ENCODE measurements at regions of chr4 and their contacts with region 1.

Region 1: DNA sequence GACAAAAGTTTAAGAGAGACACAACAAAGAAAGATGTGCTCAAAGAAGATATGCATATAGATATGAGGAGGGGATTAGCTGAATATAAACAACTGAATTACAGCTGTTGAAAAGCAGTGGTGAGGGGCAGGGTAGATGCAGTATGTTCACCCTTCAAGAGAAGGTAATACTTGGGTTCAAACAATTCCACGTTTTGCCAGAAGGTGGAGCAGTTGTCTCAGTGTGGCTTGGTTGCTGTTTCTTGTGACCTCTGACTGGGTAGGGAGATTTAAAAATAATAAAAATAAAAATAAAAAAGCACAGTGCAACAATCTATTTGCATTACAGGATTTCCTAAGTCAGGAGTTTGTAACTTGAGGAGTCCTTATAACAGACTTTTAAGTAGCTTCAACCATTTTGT is 23.3 kb downstream of the PHOX2B start:
- DNase-seq: no peak
- ATAC-seq: no peak

Region 2: DNA sequence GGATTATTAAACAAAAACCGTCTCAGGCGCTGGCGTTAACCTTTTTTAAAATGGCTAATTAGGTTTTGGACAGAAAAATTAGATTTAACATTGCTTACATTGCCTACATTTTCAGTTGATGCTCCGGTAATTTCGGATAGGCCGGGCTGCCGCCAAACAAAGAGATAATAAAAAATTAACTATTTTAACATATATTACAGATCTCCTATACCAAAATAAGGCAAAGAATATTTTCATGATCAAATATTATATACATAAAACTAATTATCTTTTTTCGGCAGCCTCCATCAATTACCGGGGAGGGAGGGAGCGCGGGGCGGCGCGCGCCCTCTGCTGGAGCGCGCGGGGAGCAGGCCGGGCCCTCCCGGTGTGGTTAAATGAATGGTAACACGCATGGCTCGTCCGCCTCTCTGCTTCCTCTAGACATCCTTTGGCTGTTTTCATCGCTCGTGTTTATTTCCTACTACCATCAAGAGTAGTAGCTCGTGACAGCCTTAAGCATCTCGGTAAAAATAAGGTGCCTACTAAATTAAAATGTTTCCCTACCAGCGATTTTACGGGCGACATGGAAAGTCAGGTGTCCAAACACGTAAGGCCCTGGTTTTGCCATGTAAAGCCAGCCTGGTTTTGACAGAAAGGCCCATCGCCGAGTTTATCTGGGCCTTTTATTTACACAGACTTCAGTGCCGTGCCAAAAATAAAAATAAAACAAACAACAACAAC is 157.5 kb after region 1 on chr4:
- intact Hi-C with region 1: no loop called
- DNase-seq: no peak
- ATAC-seq: peak; percentile 84

Region 3: GRCh38 chr4:42768125-42768748 is 1043.0 kb after region 1 on chr4:
- intact Hi-C with region 1: loop called (anchors 10 kb)
- DNase-seq: no peak
- ATAC-seq: no peak

Measured in sciatic nerve (tissue), 2 donors.